HepG2 (cell line): ENCODE measurements at regions of chr16 and their contacts with region 1.

Region 1: GRCh38 chr16:30922960-30923535 is 324 bp upstream of the FBXL19 start:
- DNase-seq: peak; percentile 99
- ATAC-seq: peak; percentile 84
- H3K4me3 ChIP-seq: peak overlapping the region; percentile 65 to 87 (median 76)
- H3K27ac ChIP-seq: peak overlapping the region; percentile 87
- H3K4me1 ChIP-seq: peaks cover 19% of the 10 kb centered on the region
- H3K27me3 ChIP-seq: no peaks in the 10 kb centered on the region; a peak in 1 of 5 replicates
- CTCF ChIP-seq: peak; percentile 10; the same call in 1 of the 2 replicates
- EP300 ChIP-seq: no peak
- POLR2A ChIP-seq: peak; percentile 66 to 86
- RAD21 ChIP-seq: no peak; the same call in 1 of the 2 replicates

Region 2: GRCh38 chr16:30874821-30875717 is 48.0 kb before region 1 on chr16:
- CTCF ChIA-PET with region 1: no interaction called
- POLR2A ChIA-PET with region 1: no interaction called
- in situ Hi-C with region 1: no loop called
- intact Hi-C with region 1: no loop called
- DNase-seq: peak; percentile 91
- ATAC-seq: peak; percentile 93
- H3K4me3 ChIP-seq: peak overlapping the region; percentile 84 to 97 (median 86)
- H3K27ac ChIP-seq: peak overlapping the region; percentile 86
- H3K4me1 ChIP-seq: peaks cover 35% of the 10 kb centered on the region
- H3K27me3 ChIP-seq: no peaks in the 10 kb centered on the region; a peak in 1 of 5 replicates
- CTCF ChIP-seq: peak; percentile 45
- EP300 ChIP-seq: peak; percentile 50 to 52; a peak in 2 of 4 replicates
- POLR2A ChIP-seq: peak; percentile 96 to 99
- RAD21 ChIP-seq: peak; percentile 80

Region 3: DNA sequence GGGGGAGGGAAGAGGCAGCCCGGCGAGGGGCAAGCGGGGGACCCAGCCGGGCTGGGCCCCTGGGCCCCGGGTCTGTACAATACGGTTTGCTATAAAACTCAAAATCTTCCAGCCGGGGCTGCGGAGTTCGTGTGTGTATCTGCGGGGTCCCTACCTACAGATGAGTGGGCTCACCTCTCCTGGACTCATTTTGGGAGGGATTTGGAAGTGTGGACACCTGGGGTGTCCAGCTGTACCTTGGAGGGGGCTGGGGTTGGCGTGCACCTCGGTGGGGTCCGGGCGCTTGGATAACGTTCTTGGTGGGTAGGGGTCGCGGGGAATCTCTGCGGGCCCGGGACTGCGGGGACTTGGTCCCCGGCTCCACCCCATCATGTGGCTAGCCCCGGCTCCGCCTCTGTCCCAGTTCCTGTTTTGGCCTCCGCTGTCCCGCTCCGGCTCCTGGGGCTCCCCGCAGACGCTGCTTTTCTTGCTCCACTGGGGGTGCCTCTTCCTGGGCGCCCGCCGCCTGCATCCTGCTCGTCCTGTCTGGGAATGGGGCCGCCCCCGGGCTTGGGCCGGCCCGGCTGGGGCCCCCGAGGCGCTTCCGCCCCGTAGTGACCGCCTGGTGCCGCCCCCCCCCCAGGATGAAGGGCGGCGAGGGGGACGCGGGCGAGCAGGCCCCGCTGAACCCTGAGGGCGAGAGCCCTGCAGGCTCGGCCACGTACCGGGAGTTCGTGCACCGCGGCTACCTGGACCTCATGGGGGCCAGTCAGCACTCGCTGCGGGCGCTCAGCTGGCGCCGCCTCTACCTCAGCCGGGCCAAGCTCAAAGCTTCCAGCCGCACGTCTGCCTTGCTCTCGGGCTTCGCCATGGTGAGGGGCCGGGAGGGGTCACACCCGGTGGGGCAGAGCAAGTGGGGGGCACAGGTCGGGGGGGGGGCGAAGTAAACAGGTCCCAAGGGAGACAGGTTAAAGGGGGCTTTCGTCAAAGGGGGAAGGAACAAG is 25.9 kb after region 1 on chr16 and contains the start of gene ORAI3:
- CTCF ChIA-PET with region 1: no interaction called
- POLR2A ChIA-PET with region 1: interaction called, 8 read pairs
- in situ Hi-C with region 1: no loop called
- intact Hi-C with region 1: loop called (anchors 1 kb)
- DNase-seq: no peak
- ATAC-seq: peak; percentile 48
- H3K4me3 ChIP-seq: peak within 1 kb of the TSS; percentile 74 to 93 (median 88)
- H3K27ac ChIP-seq: peak within 1 kb of the TSS; percentile 74
- H3K4me1 ChIP-seq: peaks cover 35% of the 10 kb centered on the region
- H3K27me3 ChIP-seq: no peaks in the 10 kb centered on the region; a peak in 1 of 5 replicates
- CTCF ChIP-seq: no peak; the same call in 1 of the 2 replicates
- EP300 ChIP-seq: no peak
- POLR2A ChIP-seq: 0 out of 4 replicates have a peak, but pooled peaks of 1 of the 2 experiments have one; percentile 20
- RAD21 ChIP-seq: peak; percentile 24; the same call in 1 of the 2 replicates
- total RNA-seq, gene ORAI3: 6.3 and 11.4 TPM in 2 replicates

Region 4: GRCh38 chr16:30964574-30965226 is 41.7 kb after region 1 on chr16:
- CTCF ChIA-PET with region 1: no interaction called
- POLR2A ChIA-PET with region 1: no interaction called
- in situ Hi-C with region 1: no loop called
- intact Hi-C with region 1: no loop called
- DNase-seq: no peak
- ATAC-seq: peak; percentile 6
- H3K4me3 ChIP-seq: no peak overlapping the region
- H3K27ac ChIP-seq: no peak overlapping the region
- H3K4me1 ChIP-seq: peaks cover under 1% of the 10 kb centered on the region; the same call in 1 of the 2 replicates
- H3K27me3 ChIP-seq: no peaks in the 10 kb centered on the region
- CTCF ChIP-seq: no peak
- EP300 ChIP-seq: no peak
- POLR2A ChIP-seq: no peak
- RAD21 ChIP-seq: no peak

Region 5: GRCh38 chr16:31286421-31287032 is 363.5 kb after region 1 on chr16:
- CTCF ChIA-PET with region 1: no interaction called
- POLR2A ChIA-PET with region 1: no interaction called
- in situ Hi-C with region 1: no loop called
- intact Hi-C with region 1: no loop called
- DNase-seq: no peak
- ATAC-seq: no peak
- H3K4me3 ChIP-seq: no peak overlapping the region
- H3K27ac ChIP-seq: no peak overlapping the region
- H3K4me1 ChIP-seq: peaks cover 18% of the 10 kb centered on the region
- H3K27me3 ChIP-seq: peaks cover 0 to 8% of the 10 kb centered on the region in 2 experiments; a peak in 1 of 5 replicates
- CTCF ChIP-seq: no peak
- EP300 ChIP-seq: no peak
- POLR2A ChIP-seq: no peak
- RAD21 ChIP-seq: no peak